Common myeloid progenitor, CD34-positive (primary cell): ENCODE measurements at regions of chr6 and their contacts with region 1.

Region 1: DNA sequence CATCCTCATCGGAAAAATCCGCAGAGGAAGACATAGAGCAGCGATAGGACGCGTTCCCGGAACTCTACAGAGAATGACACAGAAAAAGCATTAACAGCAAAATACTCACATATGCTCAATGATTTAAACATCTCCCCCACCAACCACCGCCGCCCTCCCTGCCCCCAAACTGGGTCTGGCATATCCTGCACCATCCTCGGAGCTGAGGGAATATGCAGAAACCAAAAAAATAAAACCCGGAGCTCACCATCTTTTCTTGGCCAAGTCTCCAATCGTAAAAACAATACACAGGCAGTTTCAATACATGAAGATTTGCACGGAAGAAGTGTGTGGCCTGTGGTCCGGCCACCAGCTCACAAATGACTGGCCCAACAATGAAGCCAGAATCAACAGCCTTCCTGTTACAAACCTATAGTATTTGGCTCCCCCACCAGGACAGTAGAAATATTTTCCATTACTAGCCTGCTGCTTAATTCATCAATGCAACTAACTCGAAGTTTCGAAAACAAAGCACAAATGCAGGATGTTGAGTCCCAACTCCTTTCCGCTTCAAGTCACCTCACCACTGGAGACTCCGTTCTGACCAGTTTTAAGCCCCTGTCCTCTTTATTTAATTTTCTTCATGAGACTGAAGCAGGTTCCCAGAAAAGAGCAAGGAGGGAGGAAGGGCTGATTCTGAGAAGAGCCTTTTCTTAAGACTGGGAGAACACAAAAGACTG is 103.2 kb upstream of the BEND6 start:
- DNase-seq: peak; percentile 77 to 88 (median 85)
- H3K4me3 ChIP-seq: peak overlapping the region; percentile 56 to 95 (median 76)
- H3K27ac ChIP-seq: no peak overlapping the region
- H3K4me1 ChIP-seq: peaks cover 6 to 22% (median 14%) of the 10 kb centered on the region in 4 experiments
- H3K27me3 ChIP-seq: no peaks in the 10 kb centered on the region

Region 2: DNA sequence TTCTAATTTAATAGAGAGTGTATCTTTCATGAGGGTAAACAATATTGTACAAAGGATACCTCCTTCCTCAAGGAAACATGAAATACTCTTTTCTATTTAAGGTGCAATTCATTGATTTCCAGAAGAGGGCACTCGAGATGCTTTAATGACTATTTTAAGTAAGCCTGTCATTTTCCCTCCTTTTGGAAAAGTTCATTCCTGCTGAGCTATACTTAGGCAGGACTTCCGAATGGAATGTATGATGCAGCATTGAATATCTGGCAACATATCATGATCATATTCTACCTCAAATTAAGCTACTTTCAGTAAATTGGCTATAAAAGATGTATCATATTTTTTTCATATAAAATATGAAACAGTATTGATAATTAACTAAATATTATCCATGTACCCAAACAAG is 214.1 kb before region 1 on chr6:
- CTCF ChIA-PET with region 1: interaction called, 26 read pairs
- POLR2A ChIA-PET with region 1: no interaction called
- DNase-seq: peak; percentile 57 to 72 (median 57)
- H3K4me3 ChIP-seq: no peak overlapping the region
- H3K27ac ChIP-seq: no peak overlapping the region
- H3K4me1 ChIP-seq: no peaks in the 10 kb centered on the region
- H3K27me3 ChIP-seq: no peaks in the 10 kb centered on the region

Region 3: GRCh38 chr6:56671651-56672461 is 179.8 kb before region 1 on chr6:
- CTCF ChIA-PET with region 1: no interaction called
- POLR2A ChIA-PET with region 1: no interaction called
- DNase-seq: peak in 2 of 3 donors; percentile 51 to 67
- H3K4me3 ChIP-seq: peak overlapping the region in 4 of 7 experiments; percentile 17 to 64 (median 39)
- H3K27ac ChIP-seq: peak overlapping the region; percentile 25 to 65
- H3K4me1 ChIP-seq: peaks cover 7 to 26% (median 16%) of the 10 kb centered on the region in 4 experiments
- H3K27me3 ChIP-seq: no peaks in the 10 kb centered on the region

Region 4: GRCh38 chr6:56690519-56691285 is 161.0 kb before region 1 on chr6:
- CTCF ChIA-PET with region 1: interaction called, 10 read pairs
- POLR2A ChIA-PET with region 1: no interaction called
- DNase-seq: no peak
- H3K4me3 ChIP-seq: no peak overlapping the region
- H3K27ac ChIP-seq: no peak overlapping the region
- H3K4me1 ChIP-seq: peaks cover 0 to 4% (median 2%) of the 10 kb centered on the region in 4 experiments
- H3K27me3 ChIP-seq: no peaks in the 10 kb centered on the region

Region 5: DNA sequence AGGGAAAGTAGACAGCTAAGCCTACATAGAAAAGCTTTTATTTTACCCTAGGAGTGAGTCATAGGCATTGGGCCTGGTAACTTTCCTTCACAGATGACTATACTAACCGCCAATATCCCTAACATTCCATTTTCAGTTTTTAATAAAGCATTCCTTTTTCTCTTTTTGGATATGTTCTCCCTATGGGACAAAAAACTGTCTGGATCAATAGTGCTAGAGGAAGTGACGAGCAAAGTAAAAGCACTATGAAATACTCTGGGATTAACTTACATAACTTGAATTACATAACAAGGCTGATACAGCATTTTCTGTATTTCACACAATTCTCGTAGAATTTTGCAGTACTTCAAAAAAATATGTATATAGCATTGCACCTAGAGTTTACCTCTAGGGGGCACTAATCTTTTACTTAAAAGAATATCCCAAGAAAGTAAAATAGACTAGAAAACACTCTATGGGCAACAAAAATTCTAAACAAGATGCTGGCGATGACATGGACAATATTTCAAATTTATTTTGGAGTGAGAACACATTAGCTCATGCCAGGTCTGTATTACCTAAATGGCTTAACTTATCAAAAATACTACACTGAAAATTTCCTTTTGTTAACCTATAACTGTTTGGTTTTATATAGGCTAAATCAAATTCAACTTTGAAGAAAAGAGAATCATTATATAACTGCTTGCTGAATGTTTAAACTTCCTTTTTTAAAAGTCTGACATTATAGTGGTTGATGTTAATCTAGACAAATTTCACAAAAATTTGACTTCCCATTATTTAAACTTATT is 142.7 kb before region 1 on chr6:
- CTCF ChIA-PET with region 1: interaction called, 36 read pairs
- POLR2A ChIA-PET with region 1: no interaction called
- DNase-seq: peak; percentile 75 to 86 (median 83)
- H3K4me3 ChIP-seq: no peak overlapping the region
- H3K27ac ChIP-seq: no peak overlapping the region
- H3K4me1 ChIP-seq: no peaks in the 10 kb centered on the region
- H3K27me3 ChIP-seq: no peaks in the 10 kb centered on the region

Region 6: GRCh38 chr6:56766806-56767190 is 84.9 kb before region 1 on chr6:
- CTCF ChIA-PET with region 1: interaction called, 13 read pairs
- POLR2A ChIA-PET with region 1: no interaction called
- DNase-seq: no peak
- H3K4me3 ChIP-seq: no peak overlapping the region
- H3K27ac ChIP-seq: no peak overlapping the region
- H3K4me1 ChIP-seq: peaks cover 0 to 6% (median 1%) of the 10 kb centered on the region in 4 experiments
- H3K27me3 ChIP-seq: no peaks in the 10 kb centered on the region